GM10248 (cell line): ENCODE measurements at regions of chr4 and their contacts with region 1.

Region 1: DNA sequence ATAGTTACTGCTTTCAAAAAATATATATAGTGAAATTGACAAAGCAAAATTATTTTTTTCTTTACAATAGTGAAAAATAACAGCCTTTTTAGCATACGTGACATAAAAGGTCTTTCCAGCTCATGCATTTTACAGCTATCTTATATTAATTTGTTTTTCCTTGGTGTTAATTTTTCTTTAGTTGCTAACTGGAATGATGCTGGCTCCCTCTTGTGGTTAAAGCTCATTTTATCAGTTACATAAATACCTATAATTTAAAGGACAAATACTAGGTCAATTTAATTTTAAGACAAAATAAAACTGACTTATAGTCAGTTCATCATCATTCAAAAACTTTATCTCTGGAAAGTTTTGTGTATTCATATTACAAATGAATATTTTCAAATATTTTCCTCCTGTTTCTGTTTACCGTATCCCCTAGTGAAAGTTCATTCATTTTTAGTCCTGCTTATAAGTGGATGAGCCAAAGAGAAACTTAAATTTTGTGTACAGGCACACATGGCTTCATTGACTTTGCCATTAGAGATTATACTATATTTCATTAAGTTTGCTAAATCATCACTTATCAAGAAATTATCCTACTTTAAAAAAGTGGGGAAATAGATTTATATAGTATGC is 9.9 kb upstream of the ANAPC4 start:
- DNase-seq: peak; percentile 33
- CTCF ChIP-seq: peak; percentile 59

Region 2: DNA sequence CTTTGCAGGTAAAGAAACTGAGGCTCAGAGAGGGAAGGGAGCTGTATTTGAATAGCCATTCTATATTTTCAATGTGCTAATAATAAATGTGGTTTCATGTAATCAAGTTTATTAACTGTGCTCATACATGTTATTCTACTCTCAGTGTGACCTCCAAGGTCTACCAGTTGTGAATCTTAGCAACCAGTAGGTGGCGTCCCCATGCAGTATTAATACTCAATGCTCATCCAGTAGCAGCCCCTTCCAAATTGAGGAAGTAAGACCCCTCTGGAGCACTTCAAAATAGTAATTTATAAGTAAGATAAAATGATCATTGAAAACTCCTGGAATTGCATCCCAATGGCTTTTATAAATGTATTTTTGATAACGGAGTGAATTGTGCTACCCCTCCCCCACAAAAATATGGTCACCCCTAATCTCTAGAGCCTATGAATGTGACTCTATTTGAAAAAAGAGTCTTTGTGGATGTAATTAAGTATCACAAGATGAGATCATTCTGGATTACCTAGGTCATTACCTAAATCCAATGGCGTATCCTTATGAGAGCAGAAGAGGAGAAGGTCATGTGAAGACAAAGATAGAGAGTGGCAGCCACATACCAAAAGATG is 186.5 kb before region 1 on chr4:
- CTCF ChIA-PET with region 1: interaction called, 40 read pairs
- POLR2A ChIA-PET with region 1: no interaction called
- DNase-seq: peak; percentile 42
- CTCF ChIP-seq: peak; percentile 78

Region 3: GRCh38 chr4:25351777-25352416 is 15.2 kb before region 1 on chr4:
- CTCF ChIA-PET with region 1: interaction called, 42 read pairs
- POLR2A ChIA-PET with region 1: no interaction called
- DNase-seq: no peak
- CTCF ChIP-seq: no peak